Dorsolateral prefrontal cortex (tissue), 120 donors: ENCODE measurements at regions of chr15 and their contacts with region 1.

Region 1: GRCh38 chr15:90001683-90002427 is 731 bp downstream of the ZNF710 start:
- DNase-seq: peak in 4 of 10 donors; percentile 22 to 63 (median 58)
- H3K4me3 ChIP-seq: peak overlapping the region; percentile 53 to 93 (median 77)
- H3K27ac ChIP-seq: peak overlapping the region in 55 of 59 donors; percentile 26 to 93 (median 82)
- H3K27me3 ChIP-seq: no peaks in the 10 kb centered on the region
- CTCF ChIP-seq: no peak

Region 2: GRCh38 chr15:90062023-90062442 is 60.2 kb after region 1 on chr15:
- intact Hi-C with region 1: loop called (anchors 5 to 10 kb)
- DNase-seq: peak in 2 of 10 donors; percentile 48 to 54
- H3K4me3 ChIP-seq: peak overlapping the region in 4 of 59 donors; percentile 12 to 30 (median 13)
- H3K27ac ChIP-seq: peak overlapping the region in 53 of 59 donors; percentile 22 to 87 (median 70)
- H3K27me3 ChIP-seq: no peaks in the 10 kb centered on the region
- CTCF ChIP-seq: no peak